Activated naive CD4-positive, alpha-beta T cell treated with anti-CD3 and anti-CD28 coated beads for 36 hours (primary cell): ENCODE measurements at regions of chr1 and their contacts with region 1.

Region 1: DNA sequence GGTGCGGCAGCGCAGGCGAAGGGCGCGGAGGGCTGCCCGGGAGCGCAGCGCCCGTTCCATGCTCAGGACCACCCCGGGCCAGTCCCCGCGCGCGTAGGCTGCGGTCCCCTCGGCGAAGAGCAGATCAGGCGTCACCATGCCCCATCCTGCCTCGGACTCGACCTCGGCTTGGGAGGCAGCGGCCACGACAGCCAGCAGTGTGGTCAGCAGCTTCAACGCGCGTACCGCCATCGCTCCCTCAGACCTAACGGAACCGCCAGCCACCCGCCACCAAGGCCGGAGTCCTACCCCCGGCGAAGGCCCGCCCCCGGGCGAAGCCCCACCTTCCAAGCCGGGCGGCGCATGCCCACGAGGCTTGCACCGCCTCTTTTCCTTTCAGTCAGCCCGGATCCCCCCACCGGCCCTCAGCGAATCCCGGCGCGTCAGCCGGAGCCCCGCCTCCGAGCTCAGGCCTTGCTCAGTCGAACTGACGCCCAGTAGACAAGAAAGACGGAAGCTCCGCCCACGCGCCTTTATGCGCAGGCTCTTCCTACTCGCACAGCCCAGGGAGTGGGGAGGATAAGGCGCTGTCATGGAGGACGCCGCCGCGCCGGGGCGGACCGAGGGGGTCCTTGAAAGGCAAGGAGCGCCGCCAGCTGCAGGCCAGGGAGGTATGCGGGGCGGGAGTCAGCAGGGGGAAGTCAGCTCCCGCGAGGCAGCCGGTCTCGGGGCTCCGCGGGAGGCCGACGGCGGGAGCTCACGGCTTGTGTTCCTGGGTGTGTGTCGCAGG is at the starts of genes C1orf50 and P3H1:
- DNase-seq: peak; percentile 100
- H3K4me3 Mint-ChIP-seq: no peak within 1 kb of the TSS
- H3K27ac Mint-ChIP-seq: peak within 1 kb of the TSS; percentile 83
- H3K4me1 Mint-ChIP-seq: peaks cover 35% of the 10 kb centered on the region
- H3K27me3 Mint-ChIP-seq: no peaks in the 10 kb centered on the region
- total RNA-seq, gene C1orf50: 4.1 to 4.7 TPM
- total RNA-seq, gene P3H1: 26.4 to 28.6 TPM

Region 2: GRCh38 chr1:42657971-42658879 is 108.7 kb before region 1 on chr1 and contains the start of gene PPIH:
- CTCF ChIA-PET with region 1: interaction called, 4 read pairs
- intact Hi-C with region 1: loop called (anchors 2 kb)
- DNase-seq: peak; percentile 97
- H3K4me3 Mint-ChIP-seq: peak within 1 kb of the TSS; percentile 98
- H3K27ac Mint-ChIP-seq: peak within 1 kb of the TSS; percentile 94
- H3K4me1 Mint-ChIP-seq: peaks cover 36% of the 10 kb centered on the region
- H3K27me3 Mint-ChIP-seq: no peaks in the 10 kb centered on the region
- total RNA-seq, gene PPIH: 107 to 108 TPM

Region 3: GRCh38 chr1:42816585-42817434 is 49.9 kb after region 1 on chr1 and contains the starts of genes ERMAP and SVBP:
- CTCF ChIA-PET with region 1: interaction called, 5 read pairs
- intact Hi-C with region 1: loop called (anchors 1 kb)
- DNase-seq: peak; percentile 95
- H3K4me3 Mint-ChIP-seq: peak within 1 kb of the TSS; percentile 76
- H3K27ac Mint-ChIP-seq: peak within 1 kb of the TSS; percentile 77
- H3K4me1 Mint-ChIP-seq: peaks cover 17% of the 10 kb centered on the region
- H3K27me3 Mint-ChIP-seq: no peaks in the 10 kb centered on the region
- total RNA-seq, gene ERMAP: 3.1 TPM
- total RNA-seq, gene SVBP: 16.4 to 17.0 TPM

Region 4: GRCh38 chr1:42924082-42924850 is 157.3 kb after region 1 on chr1:
- CTCF ChIA-PET with region 1: interaction called, 3 read pairs
- intact Hi-C with region 1: loop called (anchors 2 kb)
- DNase-seq: peak; percentile 95
- H3K4me3 Mint-ChIP-seq: peak overlapping the region; percentile 92
- H3K27ac Mint-ChIP-seq: peak overlapping the region; percentile 88
- H3K4me1 Mint-ChIP-seq: peaks cover 23% of the 10 kb centered on the region
- H3K27me3 Mint-ChIP-seq: no peaks in the 10 kb centered on the region

Region 5: GRCh38 chr1:42958488-42959319 is 191.8 kb after region 1 on chr1 and contains the start of gene SLC2A1:
- CTCF ChIA-PET with region 1: no interaction called
- intact Hi-C with region 1: no loop called
- DNase-seq: peak; percentile 97
- H3K4me3 Mint-ChIP-seq: peak within 1 kb of the TSS; percentile 97
- H3K27ac Mint-ChIP-seq: peak within 1 kb of the TSS; percentile 96
- H3K4me1 Mint-ChIP-seq: peaks cover 45% of the 10 kb centered on the region
- H3K27me3 Mint-ChIP-seq: no peaks in the 10 kb centered on the region
- total RNA-seq, gene SLC2A1: 21.2 to 22.7 TPM

Region 6: DNA sequence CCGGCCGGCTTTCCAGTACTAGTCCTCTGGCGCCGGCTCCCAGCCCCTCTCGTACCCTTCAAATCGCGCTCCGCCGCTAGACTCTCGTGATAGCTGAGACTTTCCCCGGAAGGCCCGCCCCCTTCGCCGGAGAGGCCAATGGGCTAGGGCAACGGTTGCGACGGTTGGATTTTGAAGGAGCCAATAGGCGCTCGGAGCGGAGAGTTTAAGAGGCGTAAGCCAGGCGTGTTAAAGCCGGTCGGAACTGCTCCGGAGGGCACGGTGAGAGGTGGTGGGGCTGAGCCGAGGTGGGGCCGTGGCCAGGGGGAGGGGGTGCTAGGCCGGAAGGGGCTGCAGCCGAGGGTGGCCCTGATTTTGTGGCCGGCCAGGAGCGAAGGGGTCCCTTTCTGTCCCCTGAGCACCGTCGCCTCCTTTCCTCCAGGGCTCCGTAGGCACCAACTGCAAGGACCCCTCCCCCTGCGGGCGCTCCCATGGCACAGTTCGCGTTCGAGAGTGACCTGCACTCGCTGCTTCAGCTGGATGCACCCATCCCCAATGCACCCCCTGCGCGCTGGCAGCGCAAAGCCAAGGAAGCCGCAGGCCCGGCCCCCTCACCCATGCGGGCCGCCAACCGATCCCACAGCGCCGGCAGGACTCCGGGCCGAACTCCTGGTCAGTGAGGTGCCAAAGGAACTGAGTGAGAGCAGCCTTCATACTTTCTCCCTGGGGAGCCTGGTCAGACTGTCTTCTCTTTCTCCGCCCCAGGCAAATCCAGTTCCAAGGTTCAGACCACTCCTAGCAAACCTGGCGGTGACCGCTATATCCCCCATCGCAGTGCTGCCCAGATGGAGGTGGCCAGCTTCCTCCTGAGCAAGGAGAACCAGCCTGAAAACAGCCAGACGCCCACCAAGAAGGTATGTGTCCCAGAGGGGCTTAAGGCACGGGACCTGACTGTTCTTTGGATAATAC is 592.1 kb after region 1 on chr1 and contains the start of gene CDC20:
- CTCF ChIA-PET with region 1: no interaction called
- intact Hi-C with region 1: loop called (anchors 2 kb)
- DNase-seq: peak; percentile 100
- H3K4me3 Mint-ChIP-seq: peak within 1 kb of the TSS; percentile 94
- H3K27ac Mint-ChIP-seq: peak within 1 kb of the TSS; percentile 85
- H3K4me1 Mint-ChIP-seq: peaks cover 32% of the 10 kb centered on the region
- H3K27me3 Mint-ChIP-seq: no peaks in the 10 kb centered on the region
- total RNA-seq, gene CDC20: 179 to 194 TPM